H1 (cell line): ENCODE measurements at regions of chr1 and their contacts with region 1.

Region 1: GRCh38 chr1:30911046-30911954 is 2.7 kb upstream of the SDC3 start:
- DNase-seq: peak; percentile 57 to 86
- H3K4me3 ChIP-seq: no peak overlapping the region
- H3K27ac ChIP-seq: no peak overlapping the region
- H3K4me1 ChIP-seq: peaks cover 0 to 22% (median 17%) of the 10 kb centered on the region in 4 experiments; a peak in 6 of 7 replicates
- H3K27me3 ChIP-seq: peaks cover 0 to 20% (median 12%) of the 10 kb centered on the region in 4 experiments; a peak in 4 of 7 replicates
- CTCF ChIP-seq: peak; percentile 84 to 97 (median 88)
- EP300 ChIP-seq: no peak
- POLR2A ChIP-seq: no peak
- RAD21 ChIP-seq: peak; percentile 99 to 100

Region 2: GRCh38 chr1:30718636-30719405 is 192.5 kb before region 1 on chr1:
- CTCF ChIA-PET with region 1: interaction called, 63 read pairs
- POLR2A ChIA-PET with region 1: no interaction called
- DNase-seq: peak in 1 of 2 experiments; percentile 97
- H3K4me3 ChIP-seq: peak overlapping the region; percentile 35 to 67 (median 56)
- H3K27ac ChIP-seq: no peak overlapping the region
- H3K4me1 ChIP-seq: peaks cover 0 to 4% (median 1%) of the 10 kb centered on the region in 4 experiments; a peak in 4 of 7 replicates
- H3K27me3 ChIP-seq: no peaks in the 10 kb centered on the region; a peak in 1 of 7 replicates
- CTCF ChIP-seq: peak in 1 of 3 experiments; percentile 89; a peak in 1 of 4 replicates
- EP300 ChIP-seq: no peak
- POLR2A ChIP-seq: no peak
- RAD21 ChIP-seq: peak; percentile 98 to 99; a peak in 2 of 4 replicates

Region 3: DNA sequence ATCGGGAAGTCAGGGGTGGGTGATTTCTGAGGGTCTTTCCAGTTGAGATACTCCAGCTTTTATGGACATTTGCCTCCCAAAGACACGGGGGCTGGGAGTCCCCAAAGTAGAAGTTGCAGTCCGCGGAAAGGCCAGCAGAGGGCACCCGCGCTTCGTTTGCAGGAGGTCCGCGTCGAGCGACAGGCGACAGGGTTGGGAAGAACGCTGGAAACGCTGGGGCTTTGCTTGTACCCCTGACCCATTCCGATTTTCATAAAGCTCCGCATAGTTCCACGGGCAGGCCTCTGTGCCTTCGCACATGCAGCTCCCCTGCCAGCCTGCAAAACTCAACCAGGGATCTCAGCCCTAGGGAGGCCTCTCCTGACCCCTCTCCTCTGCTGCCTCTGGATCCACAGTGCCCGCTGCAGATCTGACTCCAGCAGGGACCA is 109.5 kb before region 1 on chr1:
- CTCF ChIA-PET with region 1: interaction called, 1,519 read pairs
- POLR2A ChIA-PET with region 1: interaction called, 30 read pairs
- DNase-seq: peak in 1 of 2 experiments; percentile 99
- H3K4me3 ChIP-seq: peak overlapping the region in 1 of 4 experiments; percentile 43; a peak in 4 of 8 replicates
- H3K27ac ChIP-seq: no peak overlapping the region
- H3K4me1 ChIP-seq: peaks cover 10 to 30% (median 17%) of the 10 kb centered on the region in 4 experiments
- H3K27me3 ChIP-seq: peaks cover 0 to 13% (median 4%) of the 10 kb centered on the region in 4 experiments; a peak in 2 of 7 replicates
- CTCF ChIP-seq: peak; percentile 94 to 96 (median 95)
- EP300 ChIP-seq: no peak
- POLR2A ChIP-seq: no peak
- RAD21 ChIP-seq: peak; percentile 97 to 100

Region 4: DNA sequence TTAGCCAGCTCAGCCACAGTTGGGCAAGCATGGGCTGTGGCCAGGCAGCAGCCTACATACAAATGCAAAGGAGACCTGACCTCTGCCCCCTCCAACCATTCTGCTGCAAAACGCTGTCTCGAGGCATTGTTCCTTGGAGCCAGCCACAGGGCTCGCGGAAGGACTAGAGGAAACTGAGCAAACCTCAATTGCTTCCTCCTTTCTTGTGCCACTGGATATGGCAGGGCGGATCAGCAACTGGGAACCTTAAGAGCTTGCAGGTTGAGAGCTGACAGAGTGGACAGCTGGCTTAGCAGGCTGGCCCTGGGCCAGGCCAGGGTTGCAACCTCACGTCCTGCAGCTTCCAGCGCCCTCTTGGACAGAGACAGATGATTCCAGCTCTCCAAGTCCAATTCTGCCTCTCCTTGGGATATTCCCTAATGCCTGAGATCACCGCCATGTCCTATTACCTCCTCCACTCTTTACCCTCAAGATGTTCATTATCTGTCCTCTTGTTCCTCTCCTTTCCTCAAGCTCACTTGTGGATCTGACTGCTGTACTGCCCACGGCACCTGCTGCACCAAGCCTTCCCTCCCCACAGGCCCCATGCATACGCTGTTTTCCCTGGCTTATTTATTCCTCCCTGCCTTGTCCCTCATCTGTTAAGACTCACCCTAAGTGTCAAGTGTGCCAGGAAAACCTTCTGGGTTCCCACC is 70.2 kb before region 1 on chr1:
- CTCF ChIA-PET with region 1: interaction called, 56 read pairs
- POLR2A ChIA-PET with region 1: no interaction called
- DNase-seq: no peak
- H3K4me3 ChIP-seq: peak overlapping the region in 1 of 4 experiments; percentile 3; a peak in 1 of 8 replicates
- H3K27ac ChIP-seq: no peak overlapping the region
- H3K4me1 ChIP-seq: peaks cover 16 to 25% (median 18%) of the 10 kb centered on the region in 4 experiments
- H3K27me3 ChIP-seq: no peaks in the 10 kb centered on the region
- CTCF ChIP-seq: no peak
- EP300 ChIP-seq: no peak
- POLR2A ChIP-seq: no peak
- RAD21 ChIP-seq: no peak

Region 5: GRCh38 chr1:30868833-30869435 is 42.4 kb before region 1 on chr1:
- CTCF ChIA-PET with region 1: interaction called, 31 read pairs
- POLR2A ChIA-PET with region 1: no interaction called
- DNase-seq: no peak
- H3K4me3 ChIP-seq: no peak overlapping the region
- H3K27ac ChIP-seq: no peak overlapping the region
- H3K4me1 ChIP-seq: peaks cover 0 to 8% (median 5%) of the 10 kb centered on the region in 4 experiments; a peak in 4 of 7 replicates
- H3K27me3 ChIP-seq: no peaks in the 10 kb centered on the region; a peak in 1 of 7 replicates
- CTCF ChIP-seq: no peak
- EP300 ChIP-seq: no peak
- POLR2A ChIP-seq: no peak
- RAD21 ChIP-seq: no peak

Region 6: DNA sequence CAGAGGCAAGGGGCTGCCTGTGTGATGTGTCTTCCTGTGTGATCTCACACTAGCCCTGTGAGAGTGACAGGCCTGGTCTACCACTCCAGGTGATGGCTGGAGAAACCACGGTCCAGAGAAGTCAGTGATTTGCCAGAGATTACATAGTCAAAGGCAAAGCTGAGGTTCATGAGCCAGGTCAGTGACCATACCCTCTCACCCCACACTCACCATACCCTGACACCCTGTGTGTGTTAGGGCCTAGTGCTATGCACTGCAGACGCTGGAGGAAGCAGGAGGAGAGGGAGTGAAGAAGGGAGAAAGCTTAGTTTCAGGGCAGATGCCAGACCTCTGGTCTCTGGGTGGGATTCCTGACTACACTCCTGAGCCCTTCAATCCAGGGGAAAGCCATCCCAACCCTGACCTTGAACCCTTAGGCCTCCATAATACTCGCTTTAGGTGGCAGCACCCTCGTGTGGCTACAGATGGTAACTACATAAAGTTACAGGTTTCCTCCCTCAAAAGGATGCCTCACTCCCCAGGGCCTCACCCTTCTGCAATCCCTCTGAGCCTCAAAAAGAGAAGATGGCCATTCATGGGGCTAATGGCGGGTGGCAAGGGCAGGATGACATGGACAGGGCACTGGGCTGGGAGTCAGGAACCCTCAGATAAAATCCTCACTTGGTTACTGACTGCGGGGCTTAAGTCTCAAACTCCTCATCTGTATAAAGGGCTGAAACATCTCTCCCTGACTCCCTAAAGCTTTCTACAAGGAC is 18.0 kb after region 1 on chr1:
- CTCF ChIA-PET with region 1: interaction called, 94 read pairs
- POLR2A ChIA-PET with region 1: interaction called, 16 read pairs
- DNase-seq: peak; percentile 25 to 86
- H3K4me3 ChIP-seq: no peak overlapping the region
- H3K27ac ChIP-seq: no peak overlapping the region
- H3K4me1 ChIP-seq: no peaks in the 10 kb centered on the region
- H3K27me3 ChIP-seq: no peaks in the 10 kb centered on the region
- CTCF ChIP-seq: peak; percentile 47 to 86 (median 69)
- EP300 ChIP-seq: no peak
- POLR2A ChIP-seq: no peak
- RAD21 ChIP-seq: peak; percentile 83 to 88

Region 7: DNA sequence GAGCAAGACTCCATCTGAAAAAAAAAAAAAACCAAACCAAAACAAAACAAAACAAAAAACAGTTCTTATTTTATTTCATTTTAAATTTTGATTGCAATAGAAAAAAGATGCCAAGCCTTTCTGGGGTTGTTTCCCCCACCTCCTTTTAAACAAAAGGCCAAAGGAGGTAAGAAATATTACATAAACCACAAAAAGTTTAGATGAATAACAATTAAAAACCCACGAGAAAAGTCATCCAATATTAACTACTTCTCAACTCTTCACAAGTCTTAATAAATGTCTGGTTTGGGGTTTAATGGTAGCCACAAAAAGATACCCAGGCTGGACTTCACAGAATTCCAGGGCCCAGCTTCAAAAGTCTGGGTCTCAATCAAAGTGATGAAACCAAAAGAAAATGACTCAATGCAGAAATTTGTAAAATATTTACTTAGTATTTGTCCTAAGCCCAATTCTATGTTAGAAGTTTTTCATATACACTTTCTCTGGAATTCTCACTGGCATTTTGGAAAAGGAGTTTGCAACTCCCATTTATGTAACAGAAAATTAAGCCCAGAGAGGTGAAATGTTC is 44.2 kb after region 1 on chr1:
- CTCF ChIA-PET with region 1: no interaction called
- POLR2A ChIA-PET with region 1: no interaction called
- DNase-seq: no peak
- H3K4me3 ChIP-seq: no peak overlapping the region
- H3K27ac ChIP-seq: no peak overlapping the region
- H3K4me1 ChIP-seq: no peaks in the 10 kb centered on the region
- H3K27me3 ChIP-seq: no peaks in the 10 kb centered on the region
- CTCF ChIP-seq: no peak
- EP300 ChIP-seq: no peak
- POLR2A ChIP-seq: no peak
- RAD21 ChIP-seq: no peak